GM12878 (cell line): ENCODE measurements at regions of chr4 and their contacts with region 1.

Region 1: GRCh38 chr4:21790438-21791029 is 158.0 kb downstream of the KCNIP4 start:
- DNase-seq: no peak
- ATAC-seq: peak; percentile 63
- H3K4me3 ChIP-seq: no peak overlapping the region
- H3K27ac ChIP-seq: no peak overlapping the region
- H3K4me1 ChIP-seq: no peaks in the 10 kb centered on the region
- H3K27me3 ChIP-seq: no peaks in the 10 kb centered on the region
- CTCF ChIP-seq: peak; percentile 17 to 39 (median 32); a peak in 3 of 6 replicates
- EP300 ChIP-seq: no peak
- POLR2A ChIP-seq: no peak
- RAD21 ChIP-seq: peak; percentile 47

Region 2: GRCh38 chr4:21765810-21766407 is 24.6 kb before region 1 on chr4:
- CTCF ChIA-PET with region 1: interaction called, 12 read pairs
- POLR2A ChIA-PET with region 1: no interaction called
- RAD21 ChIA-PET with region 1: interaction called, 7 read pairs
- SMC1A ChIA-PET with region 1: no interaction called
- in situ Hi-C with region 1: no loop called
- intact Hi-C with region 1: no loop called
- DNase-seq: no peak
- ATAC-seq: peak; percentile 82
- H3K4me3 ChIP-seq: no peak overlapping the region
- H3K27ac ChIP-seq: no peak overlapping the region
- H3K4me1 ChIP-seq: no peaks in the 10 kb centered on the region
- H3K27me3 ChIP-seq: no peaks in the 10 kb centered on the region
- CTCF ChIP-seq: peak; percentile 78 to 91 (median 78)
- EP300 ChIP-seq: no peak
- POLR2A ChIP-seq: no peak
- RAD21 ChIP-seq: peak; percentile 62

Region 3: DNA sequence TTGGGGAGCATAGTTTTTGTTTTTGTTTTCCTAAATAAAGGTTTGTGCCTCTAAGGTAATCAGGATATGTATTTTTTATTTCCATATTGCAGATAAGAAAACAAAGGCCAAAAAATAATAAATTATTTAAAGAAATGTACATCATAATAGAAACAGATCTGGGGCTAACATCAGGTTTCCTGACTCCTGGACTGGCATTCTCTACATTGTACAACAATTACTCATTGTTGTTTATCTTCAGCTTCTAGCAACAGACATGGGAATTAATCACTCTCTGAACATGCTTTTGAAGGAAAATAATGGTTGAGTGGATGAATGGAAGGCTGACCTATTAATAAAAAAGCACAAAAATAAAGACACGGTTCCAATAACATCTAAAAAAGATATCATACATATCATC is 11.9 kb after region 1 on chr4:
- CTCF ChIA-PET with region 1: interaction called, 75 read pairs
- POLR2A ChIA-PET with region 1: no interaction called
- RAD21 ChIA-PET with region 1: interaction called, 11 read pairs
- SMC1A ChIA-PET with region 1: interaction called, 5 read pairs
- in situ Hi-C with region 1: no loop called
- intact Hi-C with region 1: no loop called
- DNase-seq: no peak
- ATAC-seq: no peak
- H3K4me3 ChIP-seq: no peak overlapping the region
- H3K27ac ChIP-seq: no peak overlapping the region
- H3K4me1 ChIP-seq: no peaks in the 10 kb centered on the region
- H3K27me3 ChIP-seq: no peaks in the 10 kb centered on the region
- CTCF ChIP-seq: no peak
- EP300 ChIP-seq: no peak
- POLR2A ChIP-seq: no peak
- RAD21 ChIP-seq: no peak

Region 4: DNA sequence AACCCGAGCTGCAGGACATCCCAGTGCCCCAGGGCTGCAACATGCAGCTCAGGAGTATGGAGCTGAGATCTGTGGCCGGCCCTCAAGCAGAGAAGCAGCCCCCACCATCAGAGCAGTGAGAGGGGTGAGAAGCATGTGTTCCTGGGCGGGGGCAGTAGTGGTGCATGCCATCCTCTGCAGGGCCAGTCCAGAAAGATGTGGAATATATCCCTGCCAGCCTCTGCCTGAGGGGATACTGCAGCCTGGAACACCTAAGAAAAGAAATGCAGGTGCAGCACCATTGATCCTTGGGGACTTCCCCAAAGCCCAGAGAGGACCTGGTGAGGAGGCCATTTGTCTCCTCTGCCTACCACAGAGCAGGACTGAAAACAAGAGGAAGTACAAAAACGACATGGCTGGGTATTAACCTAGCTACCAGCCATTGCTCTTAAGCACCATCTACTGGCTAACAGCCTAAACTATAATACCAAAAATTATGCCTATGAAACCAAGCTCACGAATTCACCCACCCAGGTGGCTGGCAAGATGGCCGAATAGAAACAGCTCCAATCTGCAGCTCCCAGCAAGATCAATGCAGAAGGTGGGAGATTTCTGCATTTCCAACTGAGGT is 566.6 kb after region 1 on chr4:
- CTCF ChIA-PET with region 1: interaction called, 32 read pairs
- POLR2A ChIA-PET with region 1: no interaction called
- RAD21 ChIA-PET with region 1: interaction called, 39 read pairs
- SMC1A ChIA-PET with region 1: interaction called, 19 read pairs
- in situ Hi-C with region 1: no loop called
- intact Hi-C with region 1: loop called (anchors 1 kb)
- DNase-seq: no peak
- ATAC-seq: peak; percentile 98
- H3K4me3 ChIP-seq: no peak overlapping the region
- H3K27ac ChIP-seq: no peak overlapping the region
- H3K4me1 ChIP-seq: no peaks in the 10 kb centered on the region
- H3K27me3 ChIP-seq: no peaks in the 10 kb centered on the region
- CTCF ChIP-seq: peak in 2 of 3 experiments; percentile 23 to 43; a peak in 3 of 6 replicates
- EP300 ChIP-seq: no peak
- POLR2A ChIP-seq: no peak
- RAD21 ChIP-seq: peak; percentile 11; the same call in 1 of the 2 replicates

Region 5: DNA sequence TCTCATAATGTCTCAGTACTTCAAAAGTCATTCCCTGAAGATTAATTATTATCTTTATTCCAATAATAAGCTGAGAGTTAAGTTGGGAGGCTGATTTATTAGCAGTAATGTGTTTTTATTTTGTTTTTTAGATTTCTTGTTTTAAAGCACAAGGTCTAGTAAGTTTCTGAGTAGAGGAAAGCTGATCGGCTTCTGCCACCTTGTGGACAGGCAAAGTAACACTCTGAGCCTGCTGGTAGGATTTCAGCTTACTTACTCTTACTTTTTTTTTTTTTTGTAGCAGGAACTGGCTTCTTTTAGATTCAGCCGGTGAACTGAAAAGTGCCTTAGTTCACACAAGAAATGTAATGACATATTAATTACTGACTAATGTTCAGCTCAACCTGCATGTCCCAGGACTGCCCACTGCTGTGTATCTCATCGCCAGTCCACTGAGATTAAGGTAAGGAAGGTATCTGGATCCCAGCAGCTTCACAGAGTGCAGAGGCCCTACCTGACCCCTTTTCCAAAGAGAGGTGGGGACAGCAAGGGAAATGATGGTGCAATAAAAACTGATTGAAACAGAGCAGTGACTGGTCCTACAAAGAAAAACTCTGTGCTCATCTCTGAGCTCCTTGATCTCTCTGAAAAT is 598.8 kb after region 1 on chr4:
- CTCF ChIA-PET with region 1: interaction called, 139 read pairs
- POLR2A ChIA-PET with region 1: interaction called, 3 read pairs
- RAD21 ChIA-PET with region 1: interaction called, 67 read pairs
- SMC1A ChIA-PET with region 1: interaction called, 72 read pairs
- in situ Hi-C with region 1: loop called (anchors 5 kb)
- intact Hi-C with region 1: loop called (anchors 1 kb)
- DNase-seq: no peak
- ATAC-seq: peak; percentile 92
- H3K4me3 ChIP-seq: no peak overlapping the region
- H3K27ac ChIP-seq: no peak overlapping the region
- H3K4me1 ChIP-seq: no peaks in the 10 kb centered on the region
- H3K27me3 ChIP-seq: no peaks in the 10 kb centered on the region
- CTCF ChIP-seq: peak; percentile 67 to 71 (median 70)
- EP300 ChIP-seq: no peak
- POLR2A ChIP-seq: no peak
- RAD21 ChIP-seq: peak; percentile 82